ENCODE measurements at regions of chr6 and their contacts with region 1.

Region 1: GRCh38 chr6:6547110-6547879 is 41.2 kb upstream of the LY86 start:
- DNase-seq: peak; percentile 77 to 87 (median 87)
- ATAC-seq: peak; percentile 96
- H3K4me3 ChIP-seq: no peak overlapping the region
- H3K4me1 ChIP-seq: peaks cover 10% of the 10 kb centered on the region
- CTCF ChIP-seq: peak; percentile 83

Region 2: GRCh38 chr6:6057424-6058053 is 489.8 kb before region 1 on chr6:
- intact Hi-C with region 1: loop called (anchors 5 kb)
- DNase-seq: peak in 1 of 3 donors; percentile 58
- ATAC-seq: peak; percentile 59
- H3K4me3 ChIP-seq: no peak overlapping the region
- H3K4me1 ChIP-seq: no peaks in the 10 kb centered on the region
- CTCF ChIP-seq: no peak

Region 3: DNA sequence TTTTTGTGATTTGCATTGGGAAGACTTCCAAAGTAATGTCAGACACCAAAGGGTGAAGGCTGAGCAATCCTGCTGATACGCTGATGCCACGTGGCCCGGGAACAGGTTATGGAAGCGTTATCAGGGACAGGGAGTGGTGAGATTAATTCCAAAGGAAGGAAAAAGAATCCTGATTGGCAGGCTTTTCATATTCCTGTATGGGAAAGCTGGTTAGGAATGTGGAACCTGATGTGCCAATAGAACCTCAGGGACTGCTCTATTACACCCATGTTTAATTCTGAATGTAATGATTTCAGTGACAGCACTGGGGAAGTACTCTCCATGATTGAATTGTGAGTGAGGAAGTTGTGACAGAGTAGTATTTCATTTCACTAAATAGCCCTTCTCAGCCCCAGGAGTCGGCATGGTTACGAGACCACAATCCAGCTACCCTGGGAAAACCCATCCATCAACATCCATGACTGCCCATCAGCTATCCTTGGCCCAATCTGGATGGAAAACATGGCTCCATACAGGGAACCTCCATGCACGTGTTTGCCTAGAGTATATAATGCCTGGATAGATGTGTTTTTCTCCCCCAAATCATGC is 276.3 kb before region 1 on chr6:
- intact Hi-C with region 1: no loop called
- DNase-seq: no peak
- ATAC-seq: no peak
- H3K4me3 ChIP-seq: no peak overlapping the region
- H3K4me1 ChIP-seq: no peaks in the 10 kb centered on the region
- CTCF ChIP-seq: no peak

Region 4: DNA sequence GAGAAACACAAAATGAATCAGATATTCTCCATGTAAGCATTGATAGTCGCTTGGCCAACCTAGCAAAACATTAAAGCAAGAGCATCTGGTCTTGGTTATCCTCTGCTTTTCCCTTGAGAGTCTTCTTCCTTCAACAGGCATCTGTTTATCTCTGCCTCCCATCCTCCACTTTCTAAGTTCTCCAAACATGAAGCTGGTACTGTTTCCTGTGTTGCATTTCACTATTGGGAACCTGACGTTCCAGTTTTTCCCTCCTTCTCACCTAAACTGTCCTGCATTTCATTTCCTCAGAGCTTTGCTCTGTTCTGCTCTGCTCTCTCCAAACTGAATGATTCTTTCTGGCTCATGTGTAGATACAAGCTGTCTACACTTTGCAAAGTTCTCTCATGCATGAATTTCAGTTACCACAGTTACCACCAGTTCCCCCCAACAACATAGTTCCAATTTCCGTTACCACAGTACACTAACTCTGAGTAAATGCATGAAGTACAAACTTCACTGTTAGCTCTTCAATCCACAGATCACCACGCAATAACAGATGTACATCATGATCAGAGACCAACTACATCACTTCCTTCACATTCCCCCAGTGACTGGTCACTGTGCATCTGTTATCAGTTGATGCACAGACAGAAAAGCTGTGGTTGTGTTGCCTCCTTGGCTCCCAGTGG is 140.1 kb before region 1 on chr6:
- intact Hi-C with region 1: no loop called
- DNase-seq: no peak
- ATAC-seq: peak; percentile 50
- H3K4me3 ChIP-seq: no peak overlapping the region
- H3K4me1 ChIP-seq: no peaks in the 10 kb centered on the region
- CTCF ChIP-seq: no peak

Measured in mucosa of descending colon (tissue), 3 donors.